ENCODE measurements at regions of chr11 and their contacts with region 1.

Region 1: DNA sequence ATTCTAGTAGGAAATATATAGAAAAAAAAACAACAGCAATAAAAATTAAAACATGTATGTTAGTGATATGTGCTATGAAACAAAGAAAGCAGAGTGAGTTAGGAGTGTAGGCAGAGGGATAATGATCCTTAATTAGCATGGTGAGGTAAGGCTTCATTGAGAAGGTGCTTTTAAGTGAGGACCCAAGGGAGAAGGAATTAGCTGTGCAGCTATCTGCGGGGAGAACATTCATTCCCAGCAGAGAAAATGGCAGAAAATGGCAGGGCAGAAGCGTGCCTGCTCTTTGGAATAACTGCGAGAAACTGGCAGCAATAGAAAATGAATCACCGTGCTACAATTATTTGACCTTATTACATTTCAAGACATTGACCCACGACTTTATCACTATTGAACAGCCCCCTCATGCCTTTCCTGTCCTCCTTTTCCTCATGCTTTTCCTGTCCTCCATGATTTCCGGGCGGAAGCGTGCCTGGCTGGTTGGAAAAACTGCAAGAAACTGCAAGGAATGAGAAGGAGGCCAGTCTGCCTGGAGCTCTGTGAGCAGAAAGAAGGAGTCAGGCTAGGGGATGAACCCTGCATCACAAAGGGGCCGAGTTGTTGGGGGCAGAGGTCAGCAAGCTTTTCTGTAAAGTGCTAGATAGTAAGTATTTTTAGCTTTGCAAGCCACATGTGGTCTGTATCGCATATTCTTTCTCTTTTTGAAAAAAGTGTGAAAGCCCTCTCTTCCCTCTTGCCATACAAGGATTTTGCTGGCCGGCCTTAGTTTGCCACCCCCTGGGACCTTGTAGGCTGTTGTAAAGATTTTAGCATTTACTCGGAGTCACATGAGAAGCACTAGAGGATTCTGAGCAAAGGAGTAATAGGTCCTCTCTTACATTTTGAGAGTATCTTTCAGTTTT is 37.1 kb upstream of the SWAP70 start:
- DNase-seq: peak; percentile 26 to 41
- ATAC-seq: peak; percentile 13 to 82 (median 72)
- H3K4me3 ChIP-seq: peak overlapping the region in 1 of 10 donors; percentile 27
- H3K27ac ChIP-seq: peak overlapping the region in 6 of 10 donors; percentile 32 to 66 (median 58)
- H3K4me1 ChIP-seq: peaks cover 0 to 38% (median 25%) of the 10 kb centered on the region in 9 donors
- H3K27me3 ChIP-seq: no peaks in the 10 kb centered on the region
- CTCF ChIP-seq: no peak

Region 2: DNA sequence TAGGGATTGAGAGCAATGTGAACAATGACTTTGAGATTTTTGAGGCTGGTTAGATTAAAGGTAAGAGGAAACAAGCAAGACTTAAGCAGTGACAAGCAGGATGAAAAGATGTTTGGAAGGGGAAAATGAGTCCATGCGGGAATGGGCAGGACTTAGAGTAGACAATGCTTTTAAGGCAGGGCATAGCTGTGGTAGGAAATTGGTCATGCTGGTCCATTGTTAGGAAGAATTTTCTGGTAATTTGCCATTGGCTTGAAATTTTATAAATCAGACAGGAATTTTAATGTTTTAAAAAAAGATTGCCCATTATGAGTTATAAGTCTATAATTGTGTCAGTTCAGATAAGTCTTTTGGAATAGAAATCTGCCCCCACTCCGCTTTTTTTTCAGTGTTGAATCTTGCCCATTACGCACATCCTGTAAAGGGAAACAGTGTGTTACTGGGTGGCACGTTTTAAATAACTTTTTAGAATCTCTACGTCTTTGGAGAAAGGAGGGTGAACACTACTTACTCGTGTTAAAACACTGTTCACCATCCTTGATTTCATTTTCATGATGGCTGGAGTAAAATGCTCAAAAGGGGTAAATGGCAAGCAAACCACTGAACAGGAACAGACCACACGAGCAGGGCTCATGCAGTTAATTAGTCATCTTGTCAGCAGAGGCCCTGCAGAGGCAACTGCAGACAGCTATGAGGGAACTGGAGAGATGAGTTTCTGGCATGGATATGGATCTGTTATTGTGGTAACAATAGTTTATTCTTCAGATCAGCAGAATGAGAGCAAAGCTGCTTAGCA is 62.2 kb after region 1 on chr11:
- intact Hi-C with region 1: loop called in 1 of 10 experiments (anchors 10 kb)
- DNase-seq: peak in 1 of 2 donors; percentile 24
- ATAC-seq: peak; percentile 64 to 86 (median 79)
- H3K4me3 ChIP-seq: peak overlapping the region in 1 of 10 donors; percentile 15
- H3K27ac ChIP-seq: peak overlapping the region; percentile 51 to 91 (median 80)
- H3K4me1 ChIP-seq: peaks cover 0 to 71% (median 41%) of the 10 kb centered on the region in 9 donors
- H3K27me3 ChIP-seq: no peaks in the 10 kb centered on the region
- CTCF ChIP-seq: no peak

Region 3: DNA sequence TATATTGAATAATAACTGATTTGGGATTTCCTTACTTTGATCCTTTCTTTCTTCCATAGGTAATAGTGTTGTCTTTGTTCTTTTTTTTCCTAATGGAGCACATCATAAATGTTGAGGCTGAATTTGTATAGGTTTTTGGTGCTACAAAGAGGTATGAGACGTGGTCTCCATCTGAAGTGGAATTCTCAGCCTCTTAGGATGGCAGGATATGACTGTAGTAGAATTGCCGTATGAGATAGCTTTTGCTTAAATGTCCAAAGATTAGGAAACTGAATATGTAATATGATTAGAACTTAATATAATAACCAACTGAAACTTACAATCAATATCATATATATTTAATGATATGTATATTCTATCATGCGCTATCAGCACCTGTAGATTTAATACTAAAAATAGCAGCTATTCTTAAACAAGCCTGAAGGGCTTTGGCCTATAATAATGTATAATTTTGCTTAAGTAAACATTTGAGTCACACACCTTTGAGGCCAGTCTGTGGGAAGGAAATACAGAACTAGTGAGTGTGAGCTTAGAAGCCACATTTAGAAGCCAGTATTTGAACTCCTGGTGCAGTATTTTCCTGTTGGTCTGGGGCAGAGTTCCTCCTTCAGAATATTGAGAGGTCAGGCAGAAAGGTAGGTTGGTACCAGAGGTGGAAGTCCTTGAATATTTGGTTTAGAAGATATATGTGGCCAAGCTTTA is 99.7 kb after region 1 on chr11:
- intact Hi-C with region 1: loop called in 1 of 10 experiments (anchors 5 kb)
- DNase-seq: no peak
- ATAC-seq: no peak
- H3K4me3 ChIP-seq: no peak overlapping the region
- H3K27ac ChIP-seq: no peak overlapping the region
- H3K4me1 ChIP-seq: peaks cover 0 to 9% (median 0%) of the 10 kb centered on the region in 9 donors
- H3K27me3 ChIP-seq: no peaks in the 10 kb centered on the region
- CTCF ChIP-seq: no peak

Region 4: DNA sequence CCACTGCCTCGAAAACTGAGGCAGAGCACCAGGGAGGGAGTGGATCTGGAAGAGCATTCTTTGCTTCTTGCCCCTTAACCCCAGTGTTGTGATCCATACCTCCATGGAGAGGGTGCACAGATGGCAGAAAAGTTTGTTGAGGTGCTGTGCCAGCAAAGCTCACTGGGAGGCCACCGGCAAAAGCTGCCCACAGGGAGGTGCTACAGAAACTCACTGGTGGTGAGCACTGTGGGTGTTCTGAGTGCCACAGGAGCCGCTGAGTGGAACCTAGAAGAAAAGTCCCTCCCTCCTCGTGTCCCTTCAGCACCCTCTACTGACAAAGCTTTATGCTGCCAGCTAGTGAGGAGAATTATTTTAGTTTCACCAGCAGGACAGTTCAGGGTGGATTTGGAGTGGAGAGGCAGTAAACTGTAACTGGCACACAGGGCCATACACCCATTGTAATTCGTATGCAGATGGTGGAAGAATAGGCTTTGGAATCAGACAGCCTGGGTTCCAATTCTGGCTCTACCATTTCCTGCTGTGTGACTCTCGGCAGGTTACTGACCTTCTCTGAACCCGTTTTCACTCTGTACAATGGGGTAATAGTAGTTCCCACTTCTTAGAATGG is 121.7 kb after region 1 on chr11:
- intact Hi-C with region 1: loop called in 1 of 10 experiments (anchors 10 kb)
- DNase-seq: peak in 1 of 2 donors; percentile 63
- ATAC-seq: peak; percentile 64 to 88 (median 86)
- H3K4me3 ChIP-seq: no peak overlapping the region
- H3K27ac ChIP-seq: peak overlapping the region in 4 of 10 donors; percentile 17 to 51 (median 36)
- H3K4me1 ChIP-seq: peaks cover 0 to 25% (median 16%) of the 10 kb centered on the region in 9 donors
- H3K27me3 ChIP-seq: no peaks in the 10 kb centered on the region
- CTCF ChIP-seq: peak; percentile 53 to 79 (median 69)

Region 5: DNA sequence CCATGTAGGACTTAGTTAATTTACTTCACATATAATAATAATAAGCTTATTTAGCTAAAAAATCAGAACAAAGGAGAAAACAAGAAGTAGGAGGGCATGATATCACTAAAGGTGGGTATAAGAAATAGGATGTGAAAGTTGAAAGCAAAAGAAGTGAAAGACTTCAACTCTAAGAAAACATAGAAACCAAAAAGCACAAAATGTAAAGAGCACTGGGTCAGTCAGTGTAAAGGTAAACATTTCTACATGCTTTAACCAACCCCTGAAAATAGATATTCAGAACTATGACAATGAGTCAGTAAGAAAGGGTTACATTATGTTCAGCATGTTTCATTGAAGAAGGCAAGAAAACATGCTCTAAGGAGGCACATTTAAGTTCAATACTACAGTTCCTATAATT is 336.0 kb after region 1 on chr11:
- intact Hi-C with region 1: no loop called
- DNase-seq: no peak
- ATAC-seq: no peak
- H3K4me3 ChIP-seq: no peak overlapping the region
- H3K27ac ChIP-seq: no peak overlapping the region
- H3K4me1 ChIP-seq: no peaks in the 10 kb centered on the region
- H3K27me3 ChIP-seq: no peaks in the 10 kb centered on the region
- CTCF ChIP-seq: no peak